Naive thymus-derived CD4-positive, alpha-beta T cell (primary cell): ENCODE measurements at regions of chr2 and their contacts with region 1.

Region 1: DNA sequence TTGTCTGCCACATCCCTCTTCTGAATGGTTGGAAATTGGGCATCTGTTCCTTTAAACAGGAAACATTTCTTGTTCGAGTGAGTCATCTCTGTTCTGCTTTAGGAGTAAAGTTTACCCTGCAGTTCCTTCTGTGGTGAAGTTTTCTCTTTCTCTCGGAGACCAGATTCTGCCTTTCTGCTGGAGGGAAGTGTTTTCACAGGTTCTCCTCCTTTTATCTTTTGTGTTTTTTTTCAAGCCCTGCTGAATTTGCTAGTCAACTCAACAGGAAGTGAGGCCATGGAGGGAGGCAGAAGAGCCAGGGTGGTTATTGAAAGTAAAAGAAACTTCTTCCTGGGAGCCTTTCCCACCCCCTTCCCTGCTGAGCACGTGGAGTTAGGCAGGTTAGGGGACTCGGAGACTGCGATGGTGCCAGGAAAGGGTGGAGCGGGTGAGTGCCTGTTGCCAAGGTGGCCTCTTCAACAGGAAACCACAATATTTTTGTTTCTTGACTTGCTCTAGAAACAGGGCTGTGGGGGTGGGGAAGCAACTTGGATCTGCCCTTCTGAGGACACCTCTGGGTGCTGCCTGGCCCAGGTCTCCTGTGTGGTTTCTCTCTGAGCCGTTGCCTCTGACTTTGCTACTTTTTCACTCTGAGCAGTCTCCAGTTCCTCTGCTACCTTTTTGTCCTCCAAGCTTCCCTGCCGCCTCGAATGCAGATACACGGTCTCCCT is 2.2 kb upstream of the CASP8 start:
- DNase-seq: peak; percentile 72 to 99 (median 98)
- ATAC-seq: peak; percentile 84
- H3K4me3 ChIP-seq: peak overlapping the region; percentile 80
- H3K4me3 Mint-ChIP-seq: peak overlapping the region; percentile 85 to 100 (median 94)
- H3K27ac ChIP-seq: peak overlapping the region; percentile 91
- H3K27ac Mint-ChIP-seq: peak overlapping the region; percentile 95 to 99 (median 98)
- H3K4me1 ChIP-seq: peaks cover 63 to 71% of the 10 kb centered on the region in 2 donors
- H3K4me1 Mint-ChIP-seq: peaks cover 44 to 91% (median 75%) of the 10 kb centered on the region in 7 donors
- H3K27me3 ChIP-seq: no peaks in the 10 kb centered on the region
- H3K27me3 Mint-ChIP-seq: no peaks in the 10 kb centered on the region

Region 2: DNA sequence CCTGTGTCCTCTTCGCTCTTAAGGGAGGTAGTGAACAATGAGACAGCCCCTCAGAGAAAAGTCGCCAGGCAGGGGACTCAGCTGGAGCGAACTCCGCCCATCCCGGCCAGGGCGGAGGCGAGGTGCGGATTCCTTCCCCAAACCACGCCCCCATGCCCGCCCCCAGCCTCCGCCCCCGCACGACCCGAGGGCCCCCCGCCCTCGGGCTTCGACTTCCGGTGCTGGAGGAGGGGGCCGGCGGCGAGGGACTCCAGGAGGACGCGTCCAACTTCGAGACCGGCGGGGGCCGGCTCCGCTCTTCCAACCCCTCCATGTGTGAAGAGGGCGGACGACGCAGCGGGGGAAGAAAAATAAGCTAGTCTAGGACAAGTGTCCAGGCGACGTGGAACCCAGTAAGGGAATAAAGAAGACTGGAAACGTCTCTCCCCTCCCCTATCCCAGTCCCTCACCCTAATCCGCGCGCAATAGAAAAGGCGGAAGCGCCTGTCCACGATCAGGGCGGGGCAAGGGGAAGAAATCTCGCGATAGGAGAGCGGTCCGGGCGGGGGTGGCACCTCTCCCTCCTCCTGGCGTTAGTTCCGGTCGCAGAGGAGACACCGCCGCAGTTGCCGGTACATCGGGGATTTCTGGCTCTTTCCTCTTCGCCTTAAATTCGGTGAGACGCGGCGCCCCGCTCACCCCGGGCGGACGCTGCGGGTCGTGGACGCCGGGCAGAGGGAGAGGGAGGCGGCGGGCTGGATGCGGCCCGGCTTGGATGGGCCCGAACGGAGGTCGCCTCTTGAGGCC is 446.6 kb before region 1 on chr2 and contains the start of gene BZW1:
- CTCF ChIA-PET with region 1: no interaction called
- POLR2A ChIA-PET with region 1: no interaction called
- intact Hi-C with region 1: loop called (anchors 1 to 2 kb)
- DNase-seq: peak; percentile 92 to 99 (median 98)
- ATAC-seq: peak; percentile 91
- H3K4me3 ChIP-seq: peak within 1 kb of the TSS; percentile 89
- H3K4me3 Mint-ChIP-seq: peak within 1 kb of the TSS; percentile 89 to 99 (median 98)
- H3K27ac ChIP-seq: peak within 1 kb of the TSS; percentile 99
- H3K27ac Mint-ChIP-seq: peak within 1 kb of the TSS; percentile 91 to 99 (median 98)
- H3K4me1 ChIP-seq: peaks cover 19 to 24% of the 10 kb centered on the region in 2 donors
- H3K4me1 Mint-ChIP-seq: peaks cover 30 to 56% (median 48%) of the 10 kb centered on the region in 7 donors
- H3K27me3 ChIP-seq: no peaks in the 10 kb centered on the region
- H3K27me3 Mint-ChIP-seq: peaks cover 0 to 2% (median 0%) of the 10 kb centered on the region in 5 donors
- total RNA-seq, gene BZW1: 127 to 246 (median 207) TPM

Region 3: GRCh38 chr2:201021914-201022313 is 236.2 kb before region 1 on chr2:
- CTCF ChIA-PET with region 1: no interaction called
- POLR2A ChIA-PET with region 1: no interaction called
- intact Hi-C with region 1: no loop called
- DNase-seq: no peak
- ATAC-seq: no peak
- H3K4me3 ChIP-seq: no peak overlapping the region
- H3K4me3 Mint-ChIP-seq: peak overlapping the region in 1 of 10 donors; percentile 42
- H3K27ac ChIP-seq: no peak overlapping the region
- H3K27ac Mint-ChIP-seq: peak overlapping the region in 1 of 9 donors; percentile 6
- H3K4me1 ChIP-seq: no peaks in the 10 kb centered on the region
- H3K4me1 Mint-ChIP-seq: peaks cover 10 to 34% (median 21%) of the 10 kb centered on the region in 7 donors
- H3K27me3 ChIP-seq: no peaks in the 10 kb centered on the region
- H3K27me3 Mint-ChIP-seq: no peaks in the 10 kb centered on the region

Region 4: DNA sequence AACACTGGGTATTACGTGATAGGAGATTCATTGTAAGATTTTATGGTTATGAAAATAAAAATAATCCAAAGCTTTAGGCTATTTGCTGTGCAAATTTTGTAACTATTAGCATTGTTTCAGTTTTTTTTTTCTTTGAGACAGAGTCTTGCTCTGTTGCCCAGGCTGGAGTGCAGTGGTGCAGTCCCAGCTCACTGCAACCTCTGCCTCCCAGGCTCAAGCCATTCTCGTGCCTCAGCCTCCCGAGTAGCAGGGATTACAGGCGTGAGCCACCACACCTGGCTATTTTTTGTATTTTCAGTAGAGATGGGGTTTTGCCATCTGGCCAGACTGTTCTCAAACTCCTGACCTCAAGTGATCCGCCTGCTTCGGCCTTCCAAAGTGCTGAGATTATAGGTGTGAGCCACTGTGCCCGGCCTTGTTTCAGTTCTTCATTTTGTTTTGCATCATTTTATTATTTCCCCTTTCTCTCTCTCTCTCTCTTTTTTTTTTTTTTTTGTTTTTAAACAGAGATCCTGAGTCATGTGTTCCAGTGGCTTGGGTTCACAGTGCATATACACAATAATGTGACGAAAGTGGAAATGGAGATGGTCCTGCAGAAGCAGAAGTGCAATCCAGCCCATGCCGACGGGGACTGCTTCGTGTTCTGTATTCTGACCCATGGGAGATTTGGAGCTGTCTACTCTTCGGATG is 49.4 kb before region 1 on chr2:
- CTCF ChIA-PET with region 1: no interaction called
- POLR2A ChIA-PET with region 1: interaction called, 3 read pairs
- intact Hi-C with region 1: loop called in 1 of 2 experiments (anchors 1 kb)
- DNase-seq: no peak
- ATAC-seq: peak; percentile 75
- H3K4me3 ChIP-seq: no peak overlapping the region
- H3K4me3 Mint-ChIP-seq: no peak overlapping the region
- H3K27ac ChIP-seq: no peak overlapping the region
- H3K27ac Mint-ChIP-seq: peak overlapping the region in 7 of 9 donors; percentile 20 to 63 (median 31)
- H3K4me1 ChIP-seq: peaks cover 0 to 29% of the 10 kb centered on the region in 2 donors
- H3K4me1 Mint-ChIP-seq: peaks cover 18 to 62% (median 33%) of the 10 kb centered on the region in 7 donors
- H3K27me3 ChIP-seq: no peaks in the 10 kb centered on the region
- H3K27me3 Mint-ChIP-seq: no peaks in the 10 kb centered on the region

Region 5: DNA sequence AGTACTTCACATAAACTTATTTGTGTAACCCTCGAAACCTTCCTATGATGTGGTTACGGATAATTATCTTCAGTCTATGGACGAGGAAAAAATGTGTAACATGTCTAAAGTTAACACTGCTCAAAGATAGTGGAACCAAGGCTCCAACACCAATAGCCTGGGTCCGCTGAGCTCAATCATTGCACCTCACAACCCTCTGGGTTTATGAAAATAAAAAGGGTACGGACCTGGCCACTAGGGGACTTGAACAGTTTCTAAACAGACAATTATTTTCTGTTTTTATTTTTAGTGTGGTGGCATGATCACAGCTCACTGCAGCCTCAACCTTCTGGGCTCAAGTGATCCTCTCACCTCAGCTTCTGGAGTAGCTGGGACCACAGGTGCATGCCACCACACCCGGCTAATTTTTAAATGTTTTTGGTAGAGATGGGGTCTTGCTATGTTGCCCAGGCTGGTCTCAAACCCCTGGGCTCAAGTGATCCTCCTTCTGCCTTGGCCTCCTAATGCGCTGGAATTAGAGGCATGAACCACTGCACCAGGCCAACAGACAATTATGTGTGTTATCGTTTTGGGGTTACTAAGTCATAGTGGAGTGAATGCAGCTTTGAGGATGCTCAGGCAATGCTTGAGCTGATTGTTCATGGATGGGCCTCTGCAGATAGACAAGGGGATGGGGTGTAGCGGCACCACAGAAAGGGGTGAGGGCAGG is 12.3 kb after region 1 on chr2:
- CTCF ChIA-PET with region 1: interaction called, 9 read pairs
- POLR2A ChIA-PET with region 1: interaction called, 30 read pairs
- intact Hi-C with region 1: loop called (anchors 1 kb)
- DNase-seq: no peak
- ATAC-seq: no peak
- H3K4me3 ChIP-seq: no peak overlapping the region
- H3K4me3 Mint-ChIP-seq: peak overlapping the region in 6 of 10 donors; percentile 3 to 32 (median 16)
- H3K27ac ChIP-seq: peak overlapping the region; percentile 14
- H3K27ac Mint-ChIP-seq: peak overlapping the region in 8 of 9 donors; percentile 32 to 85 (median 59)
- H3K4me1 ChIP-seq: peaks cover 20 to 77% of the 10 kb centered on the region in 2 donors
- H3K4me1 Mint-ChIP-seq: peaks cover 48 to 88% (median 76%) of the 10 kb centered on the region in 7 donors
- H3K27me3 ChIP-seq: no peaks in the 10 kb centered on the region
- H3K27me3 Mint-ChIP-seq: no peaks in the 10 kb centered on the region

Region 6: DNA sequence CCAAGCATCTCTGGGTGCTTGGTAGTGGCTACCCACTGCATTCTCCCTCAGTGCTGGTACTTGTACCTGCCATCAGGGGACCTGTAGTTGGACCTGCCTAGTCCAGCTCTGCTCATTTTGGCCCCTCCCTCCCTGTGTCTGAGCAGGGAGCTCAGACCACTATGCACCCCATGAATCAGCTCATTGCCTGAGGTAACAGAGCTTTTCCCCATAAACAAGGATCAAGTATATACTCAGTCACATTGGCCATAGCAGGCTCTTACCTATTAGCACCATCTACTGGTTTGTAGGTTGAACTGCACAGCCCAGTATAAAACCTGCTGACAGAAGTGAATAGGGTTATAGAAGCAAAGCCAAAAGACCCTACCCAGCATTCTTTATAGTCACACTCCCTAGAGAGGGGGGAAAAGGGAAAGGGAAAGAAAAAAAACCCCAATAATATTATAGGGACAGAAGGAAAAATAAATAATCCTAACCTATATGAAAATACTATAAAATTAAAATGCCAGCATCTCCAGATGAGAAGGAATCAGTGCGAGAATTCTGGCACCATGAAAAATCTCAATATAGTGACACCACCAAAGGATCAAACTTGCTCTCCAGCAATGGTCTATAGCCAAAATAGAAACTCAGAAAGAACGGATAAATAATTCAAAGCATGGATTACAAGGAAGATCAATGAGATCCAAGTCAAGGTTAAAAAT is 105.9 kb after region 1 on chr2:
- CTCF ChIA-PET with region 1: interaction called, 9 read pairs
- POLR2A ChIA-PET with region 1: interaction called, 5 read pairs
- intact Hi-C with region 1: loop called (anchors 1 to 2 kb)
- DNase-seq: peak in 7 of 9 donors; percentile 21 to 64 (median 61)
- ATAC-seq: peak; percentile 96
- H3K4me3 ChIP-seq: no peak overlapping the region
- H3K4me3 Mint-ChIP-seq: peak overlapping the region in 5 of 10 donors; percentile 11 to 49 (median 32)
- H3K27ac ChIP-seq: no peak overlapping the region
- H3K27ac Mint-ChIP-seq: peak overlapping the region in 7 of 9 donors; percentile 9 to 84 (median 75)
- H3K4me1 ChIP-seq: peaks cover 0 to 24% of the 10 kb centered on the region in 2 donors
- H3K4me1 Mint-ChIP-seq: peaks cover 11 to 45% (median 41%) of the 10 kb centered on the region in 7 donors
- H3K27me3 ChIP-seq: no peaks in the 10 kb centered on the region
- H3K27me3 Mint-ChIP-seq: no peaks in the 10 kb centered on the region

Region 7: GRCh38 chr2:201780674-201781581 is 522.8 kb after region 1 on chr2 and contains the start of gene ALS2:
- CTCF ChIA-PET with region 1: no interaction called
- POLR2A ChIA-PET with region 1: no interaction called
- intact Hi-C with region 1: loop called (anchors 1 kb)
- DNase-seq: peak; percentile 91 to 97 (median 95)
- ATAC-seq: peak; percentile 96
- H3K4me3 ChIP-seq: peak within 1 kb of the TSS; percentile 96
- H3K4me3 Mint-ChIP-seq: peak within 1 kb of the TSS; percentile 87 to 99 (median 98)
- H3K27ac ChIP-seq: peak within 1 kb of the TSS; percentile 84
- H3K27ac Mint-ChIP-seq: peak within 1 kb of the TSS; percentile 84 to 99 (median 97)
- H3K4me1 ChIP-seq: peaks cover 7 to 10% of the 10 kb centered on the region in 2 donors
- H3K4me1 Mint-ChIP-seq: peaks cover 5 to 36% (median 21%) of the 10 kb centered on the region in 7 donors
- H3K27me3 ChIP-seq: no peaks in the 10 kb centered on the region
- H3K27me3 Mint-ChIP-seq: peaks cover 0 to 22% (median 0%) of the 10 kb centered on the region in 5 donors
- total RNA-seq, gene ALS2: 8.9 to 13.5 (median 10.7) TPM

Region 8: DNA sequence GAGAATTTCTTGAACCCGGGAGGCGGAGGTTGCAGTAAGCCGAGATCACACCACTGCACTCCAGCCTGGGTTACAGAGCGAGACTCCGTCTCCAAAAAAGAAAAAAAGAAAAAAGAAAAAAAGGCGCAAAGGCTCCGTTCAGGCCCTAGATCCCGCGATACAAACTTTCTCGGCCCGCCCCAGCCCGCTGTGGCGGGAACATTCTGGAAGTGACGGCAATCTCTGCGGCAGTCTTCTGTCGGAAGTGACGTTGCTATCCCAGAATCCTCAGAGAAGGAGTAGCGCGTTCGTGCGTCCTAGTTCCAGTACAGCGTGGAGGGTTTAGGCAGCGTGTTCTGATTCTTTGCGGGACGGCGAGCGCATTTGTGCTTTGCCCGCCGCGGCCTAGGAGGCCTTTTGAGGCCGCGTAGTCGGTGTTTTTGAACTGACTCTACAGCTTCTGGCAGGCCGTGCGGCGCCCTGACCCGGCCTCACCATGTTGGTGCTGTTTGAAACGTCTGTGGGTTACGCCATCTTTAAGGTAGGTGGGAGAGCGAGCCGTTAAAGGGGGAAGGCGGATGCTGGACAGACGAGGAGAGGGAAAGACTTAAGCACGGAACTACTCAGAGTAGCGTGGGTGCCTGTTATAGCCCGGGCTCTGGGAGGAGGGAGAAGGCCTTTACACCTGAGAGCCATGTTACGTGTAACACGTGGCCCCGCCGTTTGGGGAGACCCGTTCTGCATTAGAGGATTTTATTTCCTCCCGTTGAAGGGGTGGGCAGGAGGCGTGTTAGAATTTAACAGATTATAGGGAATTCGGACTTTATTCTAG is 1007.6 kb after region 1 on chr2 and contains the start of gene NOP58:
- CTCF ChIA-PET with region 1: no interaction called
- POLR2A ChIA-PET with region 1: no interaction called
- intact Hi-C with region 1: loop called (anchors 2 to 10 kb)
- DNase-seq: peak; percentile 69 to 96 (median 93)
- ATAC-seq: peak; percentile 90
- H3K4me3 ChIP-seq: peak within 1 kb of the TSS; percentile 93
- H3K4me3 Mint-ChIP-seq: peak within 1 kb of the TSS in 9 of 10 donors; percentile 53 to 71 (median 64)
- H3K27ac ChIP-seq: peak within 1 kb of the TSS; percentile 92
- H3K27ac Mint-ChIP-seq: peak within 1 kb of the TSS in 6 of 9 donors; percentile 4 to 83 (median 76)
- H3K4me1 ChIP-seq: peaks cover 17 to 34% of the 10 kb centered on the region in 2 donors
- H3K4me1 Mint-ChIP-seq: peaks cover 11 to 27% (median 21%) of the 10 kb centered on the region in 7 donors
- H3K27me3 ChIP-seq: no peaks in the 10 kb centered on the region
- H3K27me3 Mint-ChIP-seq: no peaks in the 10 kb centered on the region
- total RNA-seq, gene NOP58: 105 to 259 (median 110) TPM